ENCODE measurements at regions of chr15 and their contacts with region 1.

Region 1: DNA sequence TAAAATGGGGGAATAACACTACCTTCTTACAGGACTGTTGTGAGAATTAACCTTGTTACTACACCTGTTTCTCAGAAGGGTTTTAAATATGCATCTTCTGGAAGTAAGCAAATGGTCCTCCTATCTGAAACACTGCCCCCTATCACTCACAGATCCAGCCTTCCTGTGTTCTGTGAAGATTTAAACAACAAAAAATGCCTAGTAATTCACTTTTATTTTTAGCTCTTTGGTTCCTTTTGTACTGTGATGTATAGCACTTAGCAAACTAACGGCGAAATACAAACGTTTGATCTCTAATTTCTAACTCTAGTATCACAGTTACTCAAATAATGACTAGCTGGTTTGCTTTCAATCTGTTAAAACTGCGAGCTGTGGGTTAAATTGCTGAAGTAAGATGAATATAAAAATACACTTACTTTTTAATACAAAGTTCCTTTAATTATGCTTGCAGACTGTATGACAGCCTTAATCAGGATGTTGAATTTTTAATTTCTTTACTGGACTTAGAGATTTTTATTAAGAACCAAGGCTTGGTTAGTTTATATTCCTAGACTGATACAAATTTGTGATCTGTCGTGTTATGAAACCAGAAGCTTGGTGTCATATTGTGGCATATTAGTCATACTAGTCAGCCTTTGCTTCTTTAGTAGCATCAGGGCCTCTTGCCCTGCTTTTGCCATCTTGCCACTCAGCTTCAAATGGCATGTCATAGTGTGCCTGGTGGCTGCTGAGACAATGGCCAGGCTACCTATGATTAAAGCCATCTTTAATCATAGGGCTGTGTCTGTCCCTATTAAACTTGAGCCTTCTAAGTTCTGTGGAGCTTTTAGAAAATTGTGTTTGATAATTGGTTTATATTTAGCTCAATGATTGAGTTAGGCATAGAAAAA is 9.2 kb downstream of the EIF3J start:
- DNase-seq: peak; percentile 75
- H3K4me3 Mint-ChIP-seq: peak overlapping the region; percentile 62
- H3K27ac Mint-ChIP-seq: peak overlapping the region; percentile 84
- H3K4me1 Mint-ChIP-seq: peaks cover 36% of the 10 kb centered on the region
- H3K27me3 Mint-ChIP-seq: no peaks in the 10 kb centered on the region

Region 2: DNA sequence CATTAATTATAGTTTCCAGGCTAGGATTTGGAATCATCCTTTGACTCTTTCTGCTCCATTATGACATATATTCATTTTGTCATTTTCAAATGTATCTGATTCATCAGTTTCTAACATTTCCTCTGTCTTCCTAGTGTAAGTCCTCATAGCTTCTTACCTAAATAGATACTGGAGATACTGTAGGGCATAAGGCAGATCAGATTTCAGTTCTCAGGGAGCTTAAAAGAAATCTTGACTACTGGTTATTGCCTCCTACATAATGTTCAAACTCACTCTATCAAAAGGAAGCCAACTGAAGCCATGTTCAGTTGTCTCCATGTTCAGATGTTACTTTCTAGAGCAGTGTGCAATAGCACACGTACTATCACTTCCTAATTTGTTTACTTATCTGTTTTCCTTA is 148.3 kb before region 1 on chr15:
- intact Hi-C with region 1: no loop called
- DNase-seq: no peak
- H3K4me3 Mint-ChIP-seq: no peak overlapping the region
- H3K27ac Mint-ChIP-seq: no peak overlapping the region
- H3K4me1 Mint-ChIP-seq: peaks cover 3% of the 10 kb centered on the region
- H3K27me3 Mint-ChIP-seq: no peaks in the 10 kb centered on the region

Region 3: GRCh38 chr15:44532689-44533088 is 13.5 kb before region 1 on chr15:
- intact Hi-C with region 1: no loop called
- DNase-seq: no peak
- H3K4me3 Mint-ChIP-seq: no peak overlapping the region
- H3K27ac Mint-ChIP-seq: peak overlapping the region; percentile 39
- H3K4me1 Mint-ChIP-seq: peaks cover 21% of the 10 kb centered on the region
- H3K27me3 Mint-ChIP-seq: no peaks in the 10 kb centered on the region

Region 4: GRCh38 chr15:44728576-44729407 is 182.6 kb after region 1 on chr15:
- intact Hi-C with region 1: loop called (anchors 5 kb)
- DNase-seq: peak; percentile 99
- H3K4me3 Mint-ChIP-seq: peak overlapping the region; percentile 99
- H3K27ac Mint-ChIP-seq: peak overlapping the region; percentile 100
- H3K4me1 Mint-ChIP-seq: peaks cover 64% of the 10 kb centered on the region
- H3K27me3 Mint-ChIP-seq: peaks cover 2% of the 10 kb centered on the region